WTC11 (cell line): ENCODE measurements at regions of chr1 and their contacts with region 1.

Region 1: GRCh38 chr1:182614796-182615454 is 10.7 kb upstream of the RGS16 start:
- DNase-seq: peak; percentile 55
- ATAC-seq: peak; percentile 24
- H3K4me3 Mint-ChIP-seq: peak overlapping the region; percentile 71
- H3K27ac Mint-ChIP-seq: peak overlapping the region; percentile 86
- H3K4me1 Mint-ChIP-seq: peaks cover 81% of the 10 kb centered on the region
- H3K27me3 Mint-ChIP-seq: peaks cover 67% of the 10 kb centered on the region
- CTCF ChIP-seq: no peak

Region 2: DNA sequence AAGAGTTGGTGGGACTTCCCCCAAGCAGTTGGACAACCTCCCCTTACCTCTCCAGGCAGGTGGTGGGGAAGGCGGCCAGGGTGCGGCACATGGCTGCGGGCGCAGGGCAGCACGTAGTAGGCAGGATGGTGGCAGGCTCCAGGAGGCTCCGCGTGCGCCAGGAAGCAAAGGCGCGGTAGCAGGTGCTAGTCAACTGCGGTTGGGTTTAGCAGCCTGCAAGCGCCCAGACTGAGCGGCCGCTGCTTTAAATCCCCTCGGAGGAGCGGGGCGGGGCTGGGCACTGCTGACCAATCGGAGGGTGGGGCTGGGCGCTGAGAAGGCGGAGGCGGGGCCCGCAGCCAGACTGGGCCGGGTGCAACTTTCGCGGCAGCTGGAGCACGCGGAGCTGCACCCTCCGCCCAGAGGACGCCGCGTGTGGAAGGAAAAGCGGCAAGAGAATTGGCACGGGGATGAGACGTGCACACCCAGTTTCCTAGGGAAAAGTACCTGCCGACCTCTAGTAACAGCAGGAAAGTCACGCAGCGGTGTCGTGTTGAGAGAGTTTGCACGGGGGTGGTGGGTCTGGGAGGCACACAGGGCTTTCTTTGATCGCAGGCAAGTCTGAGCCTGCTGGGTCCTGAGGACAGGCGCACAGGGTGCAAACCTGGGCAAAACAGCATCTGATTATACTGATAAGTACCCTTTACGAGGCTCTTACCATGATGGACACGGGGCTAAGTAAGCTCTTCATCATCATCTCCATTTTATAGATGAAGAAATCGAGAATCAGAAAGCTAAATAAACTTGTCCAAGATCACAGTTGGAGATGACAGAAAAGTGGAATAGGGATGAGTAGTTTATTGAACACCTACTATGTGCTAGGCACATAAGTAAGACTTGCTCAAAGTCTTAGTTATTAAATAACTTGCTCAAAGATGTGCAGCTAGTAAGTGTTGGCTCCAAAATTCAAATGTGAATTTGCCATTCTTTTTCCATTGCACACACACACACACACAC is 10.5 kb before region 1 on chr1 and contains the start of gene RGS16:
- CTCF ChIA-PET with region 1: interaction called, 32 read pairs
- POLR2A ChIA-PET with region 1: interaction called, 10 read pairs
- DNase-seq: peak; percentile 96
- ATAC-seq: peak; percentile 92
- H3K4me3 Mint-ChIP-seq: no peak within 1 kb of the TSS
- H3K27ac Mint-ChIP-seq: no peak within 1 kb of the TSS
- H3K4me1 Mint-ChIP-seq: peaks cover 11% of the 10 kb centered on the region
- H3K27me3 Mint-ChIP-seq: peaks cover 39% of the 10 kb centered on the region
- CTCF ChIP-seq: no peak
- total RNA-seq, gene RGS16: 9.9 to 17.8 TPM (median 10.2 TPM) in 3 replicates